ENCODE measurements at regions of chr3 and their contacts with region 1.

Region 1: GRCh38 chr3:69425261-69425660 is 39.4 kb upstream of the FRMD4B start:
- DNase-seq: no peak
- H3K4me3 ChIP-seq: no peak overlapping the region
- H3K27ac ChIP-seq: no peak overlapping the region
- H3K4me1 ChIP-seq: peaks cover 4 to 20% (median 13%) of the 10 kb centered on the region in 6 donors
- H3K27me3 ChIP-seq: no peaks in the 10 kb centered on the region
- CTCF ChIP-seq: peak in 10 of 11 experiments; percentile 18 to 58 (median 55)
- POLR2A ChIP-seq: no peak

Region 2: GRCh38 chr3:69306239-69307185 is 118.7 kb before region 1 on chr3:
- intact Hi-C with region 1: loop called (anchors 10 kb)
- DNase-seq: peak; percentile 87
- H3K4me3 ChIP-seq: no peak overlapping the region
- H3K27ac ChIP-seq: peak overlapping the region in 5 of 8 donors; percentile 33 to 62 (median 40)
- H3K4me1 ChIP-seq: peaks cover 0 to 13% (median 8%) of the 10 kb centered on the region in 6 donors
- H3K27me3 ChIP-seq: no peaks in the 10 kb centered on the region
- CTCF ChIP-seq: peak; percentile 76 to 95 (median 88)
- POLR2A ChIP-seq: no peak

Region 3: GRCh38 chr3:69983546-69984265 is 558.4 kb after region 1 on chr3:
- intact Hi-C with region 1: no loop called
- DNase-seq: no peak
- H3K4me3 ChIP-seq: no peak overlapping the region
- H3K27ac ChIP-seq: no peak overlapping the region
- H3K4me1 ChIP-seq: no peaks in the 10 kb centered on the region
- H3K27me3 ChIP-seq: no peaks in the 10 kb centered on the region
- CTCF ChIP-seq: no peak
- POLR2A ChIP-seq: no peak

Measured in spleen (tissue), 13 donors.